Activated CD4-positive, alpha-beta memory T cell treated with anti-CD3 and anti-CD28 coated beads for 36 hours (primary cell): ENCODE measurements at regions of chr3 and their contacts with region 1.

Region 1: DNA sequence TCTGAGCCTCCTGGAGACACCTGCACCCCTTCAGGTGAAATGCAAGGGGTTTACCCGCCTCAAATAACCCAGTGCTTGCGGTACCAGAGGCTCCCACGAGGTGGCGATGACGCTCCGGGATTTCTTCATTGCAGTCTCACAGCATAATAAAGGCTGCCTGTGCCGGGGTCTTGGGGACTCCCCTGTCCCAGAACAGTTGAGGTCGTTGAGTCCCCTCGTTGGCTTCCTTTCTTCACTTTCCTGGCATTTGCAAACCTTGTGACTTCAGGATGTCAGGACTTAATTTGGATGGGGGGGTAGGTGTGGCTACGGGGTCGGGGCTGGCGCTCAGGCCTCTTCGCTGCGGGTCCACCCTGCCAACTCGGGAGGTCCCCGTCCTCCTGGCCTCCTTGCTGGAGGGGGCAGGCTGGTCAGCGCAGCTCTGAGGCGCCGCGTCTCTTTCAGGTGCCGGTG is 1.3 kb downstream of the GNAT1 start:
- DNase-seq: peak; percentile 89
- H3K4me3 Mint-ChIP-seq: no peak overlapping the region
- H3K27ac Mint-ChIP-seq: no peak overlapping the region
- H3K4me1 Mint-ChIP-seq: peaks cover 10% of the 10 kb centered on the region
- H3K27me3 Mint-ChIP-seq: peaks cover 11% of the 10 kb centered on the region

Region 2: DNA sequence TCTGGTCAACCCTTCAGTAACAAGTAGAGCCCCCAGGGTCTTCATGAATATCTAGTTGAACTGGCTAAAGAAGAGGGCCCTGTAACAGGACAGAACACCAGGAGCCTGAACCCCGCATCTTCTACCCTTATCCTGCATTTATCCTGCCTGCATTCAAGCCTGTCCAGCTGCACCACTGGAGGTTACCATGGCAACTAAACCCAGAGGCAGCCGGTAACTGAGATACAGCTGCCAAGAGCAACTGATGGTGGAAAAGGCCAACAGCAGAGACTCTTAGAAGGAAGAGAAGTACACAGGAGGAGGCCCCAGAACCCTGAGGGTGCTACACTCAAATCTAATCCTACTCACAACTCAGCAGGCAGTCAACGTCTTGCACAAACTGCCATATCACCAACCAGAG is 1341.3 kb before region 1 on chr3:
- CTCF ChIA-PET with region 1: no interaction called
- POLR2A ChIA-PET with region 1: no interaction called
- intact Hi-C with region 1: no loop called
- DNase-seq: no peak
- H3K4me3 Mint-ChIP-seq: no peak overlapping the region
- H3K27ac Mint-ChIP-seq: no peak overlapping the region
- H3K4me1 Mint-ChIP-seq: peaks cover 14% of the 10 kb centered on the region
- H3K27me3 Mint-ChIP-seq: no peaks in the 10 kb centered on the region

Region 3: GRCh38 chr3:50121416-50122032 is 71.2 kb before region 1 on chr3:
- CTCF ChIA-PET with region 1: interaction called, 7 read pairs
- POLR2A ChIA-PET with region 1: no interaction called
- intact Hi-C with region 1: loop called (anchors 1 kb)
- DNase-seq: peak; percentile 80
- H3K4me3 Mint-ChIP-seq: no peak overlapping the region
- H3K27ac Mint-ChIP-seq: no peak overlapping the region
- H3K4me1 Mint-ChIP-seq: no peaks in the 10 kb centered on the region
- H3K27me3 Mint-ChIP-seq: no peaks in the 10 kb centered on the region

Region 4: DNA sequence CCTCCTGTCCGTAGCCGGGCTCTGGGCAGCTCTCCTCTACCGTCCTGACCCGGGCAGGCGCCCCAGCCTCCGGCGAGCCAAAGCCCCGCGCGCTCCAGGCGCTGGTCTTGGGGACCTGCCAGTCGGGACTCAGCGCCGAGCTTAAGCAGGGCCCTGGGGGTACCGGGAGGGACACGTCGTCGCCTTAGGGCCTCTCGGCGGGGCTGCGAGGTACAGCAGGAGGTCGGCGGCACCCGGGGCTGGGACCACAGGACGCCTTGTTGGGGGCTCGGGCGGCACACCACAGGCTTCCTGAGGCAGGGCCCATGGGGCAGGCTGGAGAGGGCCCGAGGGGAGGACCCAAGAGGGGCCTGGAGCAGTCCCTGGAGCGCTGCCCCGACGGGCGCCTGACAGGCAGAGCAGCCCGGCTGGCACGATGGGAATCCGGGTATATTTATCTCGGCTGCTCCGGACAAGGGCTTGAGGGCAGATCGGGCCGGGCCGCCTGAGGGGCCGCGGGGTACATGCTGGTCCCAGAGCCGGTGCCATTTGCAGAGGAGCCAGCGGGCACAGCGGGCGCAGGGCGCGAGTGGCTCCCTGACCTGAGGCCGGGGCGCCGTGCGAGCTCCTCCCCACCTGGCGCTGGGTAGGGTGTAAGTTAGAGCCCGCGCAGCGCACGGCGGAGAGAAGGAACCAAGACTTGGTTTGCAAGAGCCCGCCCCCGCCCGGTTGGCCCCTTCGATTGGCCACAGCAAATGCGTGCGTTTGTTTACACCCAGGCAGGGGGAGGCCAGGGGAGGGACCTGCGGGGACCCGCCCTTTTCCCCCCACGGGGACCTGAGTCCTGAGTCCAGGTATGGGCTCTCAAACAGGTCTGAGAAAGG is 12.9 kb after region 1 on chr3:
- CTCF ChIA-PET with region 1: interaction called, 79 read pairs
- POLR2A ChIA-PET with region 1: no interaction called
- intact Hi-C with region 1: no loop called
- DNase-seq: peak; percentile 41
- H3K4me3 Mint-ChIP-seq: peak overlapping the region; percentile 16
- H3K27ac Mint-ChIP-seq: no peak overlapping the region
- H3K4me1 Mint-ChIP-seq: peaks cover 2% of the 10 kb centered on the region
- H3K27me3 Mint-ChIP-seq: peaks cover 43% of the 10 kb centered on the region

Region 5: DNA sequence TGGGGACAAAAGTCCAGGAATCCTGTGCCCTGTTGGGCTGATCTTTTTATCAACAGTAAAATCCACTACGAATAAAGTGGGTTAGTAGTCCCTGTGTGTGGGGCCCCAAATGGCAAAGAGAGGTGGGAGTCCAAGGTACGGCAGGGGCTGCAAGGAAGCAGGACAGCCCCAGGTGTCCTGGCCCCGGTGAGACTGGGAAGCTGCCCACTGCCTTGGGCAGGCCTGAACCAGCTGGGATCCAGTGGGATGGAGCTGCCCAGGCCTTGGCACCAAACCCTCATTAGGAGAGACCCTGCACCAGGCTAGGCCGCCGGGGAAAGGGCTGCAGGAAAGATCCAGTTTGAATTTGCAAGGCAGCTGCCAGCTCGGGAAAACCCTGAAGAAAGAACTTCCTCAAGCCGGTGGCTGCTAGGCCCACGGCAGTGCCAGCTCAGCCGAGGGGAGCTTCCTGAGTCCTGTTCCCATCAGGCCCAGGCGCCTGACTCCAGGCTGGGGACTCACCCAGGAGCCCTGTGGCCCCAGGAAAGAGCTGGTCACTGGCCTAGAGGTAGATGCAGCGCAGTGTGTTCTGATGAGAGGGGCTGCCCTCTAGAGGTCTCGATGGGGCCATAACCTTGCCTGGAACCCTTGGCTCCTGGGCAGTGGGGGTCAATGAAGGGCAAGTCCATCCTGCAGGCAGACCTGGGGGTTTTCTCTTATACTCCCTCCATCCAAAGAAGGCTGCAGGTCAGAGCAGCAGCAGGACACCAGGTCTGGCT is 28.9 kb after region 1 on chr3:
- CTCF ChIA-PET with region 1: interaction called, 194 read pairs
- POLR2A ChIA-PET with region 1: no interaction called
- intact Hi-C with region 1: loop called (anchors 1 kb)
- DNase-seq: no peak
- H3K4me3 Mint-ChIP-seq: no peak overlapping the region
- H3K27ac Mint-ChIP-seq: no peak overlapping the region
- H3K4me1 Mint-ChIP-seq: peaks cover 5% of the 10 kb centered on the region
- H3K27me3 Mint-ChIP-seq: no peaks in the 10 kb centered on the region

Region 6: DNA sequence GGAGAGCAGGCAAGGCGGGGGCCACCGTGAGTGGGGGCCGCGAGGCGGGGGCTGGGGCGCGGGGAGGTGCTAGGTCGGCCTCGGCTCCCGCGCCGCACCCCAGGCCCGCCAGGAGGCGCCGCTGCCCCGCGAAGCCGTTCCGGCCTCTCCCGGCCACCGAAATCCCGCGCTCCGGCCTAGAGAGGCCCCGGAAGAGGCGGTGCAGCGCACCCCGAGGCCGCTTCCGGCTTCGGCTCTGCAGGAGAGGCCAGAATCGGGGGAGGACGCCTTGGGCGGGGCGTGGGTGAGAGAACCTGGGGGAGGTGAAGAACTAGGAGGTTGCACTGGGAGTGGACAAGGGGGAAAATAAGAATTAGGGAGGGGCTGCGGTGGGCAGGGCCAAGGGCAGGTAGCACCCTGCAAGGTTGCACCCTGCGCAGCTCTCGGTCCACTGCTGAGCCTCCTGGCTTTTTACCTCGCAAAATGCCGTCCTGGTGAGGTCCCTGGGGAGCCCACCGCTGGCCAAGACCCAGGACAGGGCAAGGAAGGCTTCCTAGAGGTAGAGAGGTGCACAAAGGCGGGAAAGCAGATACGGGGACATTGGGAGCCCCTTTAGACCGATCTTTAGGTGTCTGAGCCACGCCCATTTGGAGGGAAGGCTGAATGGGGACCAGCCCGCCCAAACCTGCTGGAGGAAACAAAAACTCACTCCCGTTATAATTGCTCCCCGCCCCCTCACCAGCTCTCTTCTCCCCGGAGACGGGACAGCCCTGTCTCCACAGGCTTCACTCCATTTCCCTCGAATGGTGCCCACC is 34.9 kb after region 1 on chr3:
- CTCF ChIA-PET with region 1: interaction called, 194 read pairs
- POLR2A ChIA-PET with region 1: no interaction called
- intact Hi-C with region 1: loop called (anchors 1 kb)
- DNase-seq: peak; percentile 94
- H3K4me3 Mint-ChIP-seq: peak overlapping the region; percentile 94
- H3K27ac Mint-ChIP-seq: peak overlapping the region; percentile 90
- H3K4me1 Mint-ChIP-seq: peaks cover 17% of the 10 kb centered on the region
- H3K27me3 Mint-ChIP-seq: no peaks in the 10 kb centered on the region

Region 7: GRCh38 chr3:50251220-50251619 is 58.5 kb after region 1 on chr3:
- CTCF ChIA-PET with region 1: interaction called, 42 read pairs
- POLR2A ChIA-PET with region 1: no interaction called
- intact Hi-C with region 1: no loop called
- DNase-seq: peak; percentile 82
- H3K4me3 Mint-ChIP-seq: no peak overlapping the region
- H3K27ac Mint-ChIP-seq: peak overlapping the region; percentile 68
- H3K4me1 Mint-ChIP-seq: peaks cover 47% of the 10 kb centered on the region
- H3K27me3 Mint-ChIP-seq: no peaks in the 10 kb centered on the region